Activated CD4-positive, alpha-beta memory T cell treated with anti-CD3 and anti-CD28 coated beads, Interleukin-2, amount 10 ng/mL, durations not matched to agents 7 days and 5 days (primary cell): ENCODE measurements at regions of chr15 and their contacts with region 1.

Region 1: GRCh38 chr15:65792130-65792987 is at the start of gene DENND4A:
- DNase-seq: peak; percentile 99
- H3K4me3 Mint-ChIP-seq: peak within 1 kb of the TSS; percentile 83
- H3K27ac Mint-ChIP-seq: peak within 1 kb of the TSS; percentile 95
- H3K4me1 Mint-ChIP-seq: peaks cover 69% of the 10 kb centered on the region
- H3K27me3 Mint-ChIP-seq: no peaks in the 10 kb centered on the region
- total RNA-seq, gene DENND4A: 40.4 to 41.1 TPM

Region 2: DNA sequence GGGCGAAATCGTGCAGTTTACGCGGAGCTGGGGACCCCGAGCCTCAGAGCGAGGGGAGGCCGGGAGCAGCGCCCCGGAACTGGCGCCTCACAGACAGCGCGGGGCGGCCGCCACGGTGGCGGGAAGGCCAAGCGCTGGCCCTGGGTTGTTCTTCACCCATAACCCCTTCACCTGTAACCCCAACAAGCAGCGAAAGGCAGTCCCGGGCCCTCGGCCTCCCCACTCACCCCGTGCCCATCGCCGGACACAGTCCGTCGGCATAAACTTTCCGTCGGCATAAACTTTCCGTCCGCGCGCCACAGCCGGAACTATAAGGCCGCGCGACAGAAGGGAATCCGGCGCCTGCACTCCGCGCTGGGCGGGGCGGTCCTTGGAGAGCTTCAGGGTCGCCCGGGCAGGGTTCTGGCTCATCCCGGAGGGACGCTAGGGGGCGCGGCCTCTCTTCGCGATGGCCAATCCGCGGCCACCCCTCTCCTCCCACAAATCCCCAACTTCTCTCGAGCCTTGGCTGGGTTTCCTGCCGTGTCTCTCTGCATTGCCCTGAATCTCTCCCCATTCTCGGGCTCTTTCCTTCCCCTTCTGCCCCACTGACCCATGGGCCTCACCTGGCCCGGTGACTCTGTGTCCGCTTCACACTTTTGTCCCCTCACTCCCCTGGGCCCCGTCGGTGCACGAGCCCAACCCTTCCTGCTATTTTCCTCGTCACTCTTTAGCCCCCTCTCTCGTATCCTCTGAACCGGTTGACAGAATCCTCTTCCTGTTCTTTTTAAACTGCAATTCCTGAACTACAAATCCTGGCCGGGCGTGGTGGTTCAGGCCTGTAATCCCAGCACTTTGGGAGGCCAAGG is 181.3 kb before region 1 on chr15 and contains the start of gene INTS14:
- CTCF ChIA-PET with region 1: no interaction called
- POLR2A ChIA-PET with region 1: interaction called, 10 read pairs
- DNase-seq: peak; percentile 94
- H3K4me3 Mint-ChIP-seq: peak within 1 kb of the TSS; percentile 82
- H3K27ac Mint-ChIP-seq: peak within 1 kb of the TSS; percentile 76
- H3K4me1 Mint-ChIP-seq: peaks cover 40% of the 10 kb centered on the region
- H3K27me3 Mint-ChIP-seq: no peaks in the 10 kb centered on the region
- total RNA-seq, gene INTS14: 35.8 to 41.6 TPM

Region 3: GRCh38 chr15:65777053-65777452 is 15.3 kb before region 1 on chr15:
- CTCF ChIA-PET with region 1: no interaction called
- POLR2A ChIA-PET with region 1: interaction called, 40 read pairs
- DNase-seq: no peak
- H3K4me3 Mint-ChIP-seq: no peak overlapping the region
- H3K27ac Mint-ChIP-seq: no peak overlapping the region
- H3K4me1 Mint-ChIP-seq: peaks cover 31% of the 10 kb centered on the region
- H3K27me3 Mint-ChIP-seq: no peaks in the 10 kb centered on the region

Region 4: DNA sequence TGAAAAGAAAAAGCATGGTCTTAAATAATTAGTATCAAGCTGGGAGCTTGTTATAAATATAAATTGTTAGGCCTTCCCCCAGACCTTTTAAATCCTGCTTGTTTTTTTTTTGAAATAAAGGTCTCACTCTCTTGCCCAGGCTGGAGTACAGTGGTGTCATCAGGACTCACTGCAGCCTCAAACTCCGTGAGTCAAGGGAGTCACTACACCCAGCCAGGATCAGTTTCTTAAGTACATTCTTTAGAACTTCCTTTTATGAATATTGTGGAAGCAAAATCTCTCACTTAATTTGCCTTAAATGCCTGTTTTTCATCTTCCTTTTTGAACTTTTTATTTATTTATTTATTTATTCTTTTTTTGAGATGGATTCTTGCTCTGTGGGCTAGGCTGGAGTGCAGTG is 20.6 kb after region 1 on chr15:
- CTCF ChIA-PET with region 1: interaction called, 34 read pairs
- POLR2A ChIA-PET with region 1: interaction called, 115 read pairs
- DNase-seq: no peak
- H3K4me3 Mint-ChIP-seq: no peak overlapping the region
- H3K27ac Mint-ChIP-seq: no peak overlapping the region
- H3K4me1 Mint-ChIP-seq: peaks cover 15% of the 10 kb centered on the region
- H3K27me3 Mint-ChIP-seq: peaks cover 1% of the 10 kb centered on the region

Region 5: GRCh38 chr15:65824031-65824743 is 31.8 kb after region 1 on chr15:
- CTCF ChIA-PET with region 1: interaction called, 34 read pairs
- POLR2A ChIA-PET with region 1: interaction called, 110 read pairs
- DNase-seq: no peak
- H3K4me3 Mint-ChIP-seq: no peak overlapping the region
- H3K27ac Mint-ChIP-seq: no peak overlapping the region
- H3K4me1 Mint-ChIP-seq: peaks cover 55% of the 10 kb centered on the region
- H3K27me3 Mint-ChIP-seq: no peaks in the 10 kb centered on the region

Region 6: GRCh38 chr15:65869127-65869953 is 77.0 kb after region 1 on chr15 and contains the start of gene RAB11A:
- CTCF ChIA-PET with region 1: interaction called, 10 read pairs
- POLR2A ChIA-PET with region 1: interaction called, 45 read pairs
- DNase-seq: peak; percentile 95
- H3K4me3 Mint-ChIP-seq: peak within 1 kb of the TSS; percentile 100
- H3K27ac Mint-ChIP-seq: peak within 1 kb of the TSS; percentile 97
- H3K4me1 Mint-ChIP-seq: peaks cover 30% of the 10 kb centered on the region
- H3K27me3 Mint-ChIP-seq: peaks cover 2% of the 10 kb centered on the region
- total RNA-seq, gene RAB11A: 192 to 193 TPM